T-cell (primary cell): ENCODE measurements at regions of chr20 and their contacts with region 1.

Region 1: DNA sequence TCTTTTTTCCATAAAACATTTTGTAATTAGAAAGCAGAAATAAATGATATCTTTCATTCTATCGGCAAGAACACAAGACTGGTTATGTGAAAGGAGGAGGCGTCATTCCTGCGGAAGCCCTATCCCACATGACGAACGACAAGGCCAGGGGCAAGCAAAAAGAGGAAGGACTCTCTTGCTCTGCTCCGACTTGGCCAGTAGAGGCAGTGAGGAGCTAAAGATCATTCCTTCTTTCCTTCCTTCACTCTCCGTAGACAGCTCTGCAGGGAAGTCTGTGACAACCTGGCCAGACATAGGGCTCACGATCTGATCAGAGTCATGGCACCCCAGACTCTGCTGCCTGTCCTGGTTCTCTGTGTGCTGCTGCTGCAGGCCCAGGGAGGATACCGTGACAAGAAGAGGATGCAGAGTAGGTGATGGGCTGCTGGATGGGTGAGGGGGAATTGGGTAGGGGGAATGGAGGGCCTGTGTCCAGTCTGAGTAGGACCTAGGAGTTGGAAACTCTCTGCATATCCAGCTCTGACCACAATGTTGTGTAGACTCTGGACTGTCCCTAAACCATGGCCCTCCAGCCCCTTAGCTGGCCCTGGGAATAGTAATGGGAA is at the start of gene WFDC10A:
- DNase-seq: peak in 10 of 35 experiments; percentile 0 to 28 (median 4)
- ATAC-seq: peak; percentile 35 to 62 (median 56)
- H3K4me3 ChIP-seq: no peak within 1 kb of the TSS
- H3K4me3 Mint-ChIP-seq: no peak within 1 kb of the TSS
- H3K27ac ChIP-seq: no peak within 1 kb of the TSS
- H3K27ac Mint-ChIP-seq: no peak within 1 kb of the TSS
- H3K4me1 ChIP-seq: peaks cover 0 to 3% of the 10 kb centered on the region in 2 experiments
- H3K4me1 Mint-ChIP-seq: peaks cover 3 to 5% (median 3%) of the 10 kb centered on the region in 3 donors
- H3K27me3 ChIP-seq: peaks cover 2 to 15% of the 10 kb centered on the region in 2 experiments
- H3K27me3 Mint-ChIP-seq: peaks cover 45 to 50% of the 10 kb centered on the region in 2 donors
- total RNA-seq, gene WFDC10A: not detected

Region 2: GRCh38 chr20:44271915-44272663 is 1357.5 kb before region 1 on chr20:
- CTCF ChIA-PET with region 1: interaction called in 1 of 2 experiments, 11 read pairs
- POLR2A ChIA-PET with region 1: no interaction called
- DNase-seq: peak in 7 of 35 experiments; percentile 3 to 35 (median 7)
- ATAC-seq: no peak
- H3K4me3 ChIP-seq: no peak overlapping the region
- H3K4me3 Mint-ChIP-seq: no peak overlapping the region
- H3K27ac ChIP-seq: no peak overlapping the region
- H3K27ac Mint-ChIP-seq: no peak overlapping the region
- H3K4me1 ChIP-seq: no peaks in the 10 kb centered on the region
- H3K4me1 Mint-ChIP-seq: peaks cover 0 to 8% (median 0%) of the 10 kb centered on the region in 3 donors
- H3K27me3 ChIP-seq: no peaks in the 10 kb centered on the region
- H3K27me3 Mint-ChIP-seq: no peaks in the 10 kb centered on the region

Region 3: DNA sequence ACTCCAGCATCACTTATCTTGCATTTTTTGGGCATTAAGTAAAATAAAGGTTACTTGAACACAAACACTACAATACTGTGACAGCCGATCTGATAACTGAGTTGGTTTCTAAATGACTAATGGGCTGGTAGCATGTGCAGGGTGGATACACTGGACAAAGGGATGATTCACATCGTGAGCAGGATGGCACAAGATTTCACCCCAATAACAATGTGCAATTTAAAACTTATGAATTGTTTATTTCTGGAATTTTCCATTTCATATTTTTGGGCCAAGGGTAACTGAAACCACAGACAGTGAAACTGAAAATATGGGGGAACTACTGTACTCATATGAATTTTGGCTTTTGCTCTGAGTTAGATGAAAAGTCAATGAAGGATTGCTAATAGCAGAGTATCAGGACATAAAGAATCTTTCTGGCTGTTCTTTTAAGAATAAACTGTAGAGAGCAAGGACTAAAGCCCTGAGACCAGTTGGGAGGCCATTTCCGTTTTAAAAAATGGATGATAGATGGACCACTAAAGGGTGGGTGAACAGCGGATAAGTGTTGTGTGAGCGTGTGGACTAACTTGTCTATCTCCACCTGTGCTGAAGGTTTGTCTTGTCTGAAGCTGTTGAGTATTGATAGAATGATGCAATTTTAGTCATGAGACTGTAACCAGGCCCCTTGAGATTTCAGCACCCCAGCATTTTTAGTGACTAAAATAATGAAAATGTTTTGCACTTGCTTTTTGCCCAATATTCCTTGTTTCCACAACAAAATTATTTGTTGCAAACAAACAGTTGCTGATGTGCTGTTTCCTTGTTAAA is 122.4 kb before region 1 on chr20:
- CTCF ChIA-PET with region 1: no interaction called
- POLR2A ChIA-PET with region 1: no interaction called
- DNase-seq: no peak
- ATAC-seq: no peak
- H3K4me3 ChIP-seq: no peak overlapping the region
- H3K4me3 Mint-ChIP-seq: no peak overlapping the region
- H3K27ac ChIP-seq: no peak overlapping the region
- H3K27ac Mint-ChIP-seq: no peak overlapping the region
- H3K4me1 ChIP-seq: no peaks in the 10 kb centered on the region
- H3K4me1 Mint-ChIP-seq: peaks cover 0 to 2% (median 0%) of the 10 kb centered on the region in 3 donors
- H3K27me3 ChIP-seq: peaks cover 0 to 7% of the 10 kb centered on the region in 2 experiments
- H3K27me3 Mint-ChIP-seq: peaks cover 25 to 48% of the 10 kb centered on the region in 2 donors